ENCODE measurements at regions of chr10 and their contacts with region 1.

Region 1: DNA sequence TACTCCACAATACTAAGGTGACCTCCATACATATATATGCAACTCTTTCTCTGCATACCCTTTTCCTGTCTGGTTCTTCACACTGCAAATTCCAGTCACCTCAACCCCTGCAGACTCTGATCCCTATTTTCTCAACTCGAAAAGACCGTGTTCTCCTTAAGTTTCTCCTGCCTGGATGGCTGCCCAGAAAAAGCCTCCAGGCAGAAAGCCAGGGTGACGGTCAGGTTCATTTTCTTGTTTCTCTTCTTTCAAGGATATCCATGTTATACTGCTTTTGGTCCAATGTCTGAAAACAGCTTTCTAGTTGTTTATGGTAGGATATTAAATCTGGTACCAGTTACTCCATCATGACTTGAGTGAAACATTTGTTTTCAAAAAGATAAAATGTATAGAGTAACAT is 267.8 kb upstream of the MYO3A start:
- DNase-seq: no peak
- ATAC-seq: no peak
- H3K4me3 ChIP-seq: no peak overlapping the region
- H3K27ac ChIP-seq: no peak overlapping the region
- H3K4me1 ChIP-seq: no peaks in the 10 kb centered on the region
- H3K27me3 ChIP-seq: no peaks in the 10 kb centered on the region
- CTCF ChIP-seq: no peak

Region 2: DNA sequence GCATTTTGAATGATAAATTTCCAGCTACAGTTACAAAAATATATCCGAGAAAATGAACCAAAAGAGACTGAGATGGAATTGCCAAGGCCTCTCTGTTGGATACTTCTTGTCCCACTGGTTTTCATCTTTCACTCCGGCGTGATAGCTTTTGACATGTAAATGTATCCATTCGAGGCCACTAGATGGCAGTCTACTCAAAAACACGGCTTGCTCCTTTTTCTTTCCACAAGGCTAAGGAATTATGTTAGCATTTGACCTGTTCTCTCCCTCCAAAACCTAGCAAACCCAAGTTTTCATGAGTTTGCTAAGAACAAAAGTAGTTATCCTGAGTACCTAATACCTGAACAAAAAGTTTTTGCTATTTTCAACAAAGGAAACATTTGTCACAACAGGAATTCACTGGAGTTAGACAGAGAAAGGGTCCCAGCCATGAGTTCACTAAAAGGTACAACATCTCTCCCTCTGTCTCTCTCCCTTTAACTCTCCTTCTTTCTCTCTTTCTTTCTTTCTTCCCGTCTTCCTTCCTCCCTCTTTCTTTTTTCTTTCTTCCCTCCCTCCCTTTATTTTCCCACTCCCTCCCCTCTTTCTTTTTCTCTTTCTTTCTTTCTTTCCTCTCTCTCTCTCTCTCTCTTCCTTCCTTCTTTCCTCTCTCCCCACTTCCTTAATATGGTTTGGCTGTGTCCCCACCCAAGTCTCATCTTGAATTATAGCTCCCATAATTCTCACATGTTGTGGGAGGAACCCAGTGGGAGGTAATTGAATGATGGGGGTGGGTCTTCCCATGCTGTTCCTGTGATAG is 59.8 kb after region 1 on chr10:
- CTCF ChIA-PET with region 1: interaction called, 15 read pairs
- POLR2A ChIA-PET with region 1: no interaction called
- intact Hi-C with region 1: no loop called
- DNase-seq: peak; percentile 66
- ATAC-seq: peak; percentile 46; the same call in 1 of the 2 replicates
- H3K4me3 ChIP-seq: no peak overlapping the region
- H3K27ac ChIP-seq: no peak overlapping the region
- H3K4me1 ChIP-seq: no peaks in the 10 kb centered on the region
- H3K27me3 ChIP-seq: no peaks in the 10 kb centered on the region
- CTCF ChIP-seq: peak; percentile 71

Region 3: GRCh38 chr10:25768167-25768566 is 101.9 kb after region 1 on chr10:
- CTCF ChIA-PET with region 1: no interaction called
- POLR2A ChIA-PET with region 1: no interaction called
- intact Hi-C with region 1: no loop called
- DNase-seq: no peak
- ATAC-seq: no peak
- H3K4me3 ChIP-seq: no peak overlapping the region
- H3K27ac ChIP-seq: no peak overlapping the region
- H3K4me1 ChIP-seq: no peaks in the 10 kb centered on the region
- H3K27me3 ChIP-seq: peaks cover 9% of the 10 kb centered on the region; the same call in 1 of the 2 replicates
- CTCF ChIP-seq: no peak

Region 4: GRCh38 chr10:26138613-26139012 is 472.3 kb after region 1 on chr10:
- CTCF ChIA-PET with region 1: no interaction called
- POLR2A ChIA-PET with region 1: no interaction called
- intact Hi-C with region 1: no loop called
- DNase-seq: no peak
- ATAC-seq: no peak
- H3K4me3 ChIP-seq: no peak overlapping the region
- H3K27ac ChIP-seq: no peak overlapping the region
- H3K4me1 ChIP-seq: no peaks in the 10 kb centered on the region
- H3K27me3 ChIP-seq: no peaks in the 10 kb centered on the region
- CTCF ChIP-seq: no peak

Measured in PC-3 (cell line).